Posterior cingulate gyrus (tissue), 11 donors: ENCODE measurements at regions of chr12 and their contacts with region 1.

Region 1: GRCh38 chr12:6688999-6689882 is at the start of gene ZNF384:
- DNase-seq: peak; percentile 99 to 100 (median 99)

Region 2: DNA sequence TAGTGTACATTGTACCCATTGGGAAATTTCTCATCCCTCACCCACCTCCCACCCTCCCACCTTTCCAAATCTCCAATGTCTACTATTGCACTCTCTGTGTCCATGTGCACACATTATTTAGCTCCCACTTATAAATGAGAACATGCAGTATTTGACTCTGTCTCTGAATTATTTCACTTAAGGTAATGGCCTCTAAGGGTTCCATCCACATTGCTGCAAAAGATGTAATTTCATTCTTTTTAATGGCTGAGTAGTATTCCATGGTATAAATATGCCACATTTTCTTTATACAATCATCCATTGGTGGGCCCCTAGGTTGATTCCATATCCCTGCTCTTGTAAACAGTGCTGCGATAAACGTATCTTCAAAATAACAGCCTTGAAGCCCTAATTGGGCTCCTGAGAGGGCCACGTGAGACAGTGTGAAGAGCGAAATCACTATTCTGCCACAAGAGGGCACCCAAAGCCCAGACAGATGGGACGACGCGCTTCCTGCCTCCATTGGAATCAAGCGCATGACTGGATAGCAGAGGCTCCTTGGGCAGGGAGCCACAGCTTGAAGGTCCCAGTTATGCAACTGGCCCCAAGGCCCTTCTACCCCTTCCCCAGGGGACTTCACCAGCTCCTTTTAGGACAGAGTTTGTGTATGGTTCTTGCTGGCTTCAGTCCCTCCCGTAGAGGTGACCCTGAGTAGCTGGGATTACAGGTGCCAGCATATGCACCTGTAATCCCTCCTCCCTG is 265.8 kb before region 1 on chr12:
- intact Hi-C with region 1: no loop called
- DNase-seq: peak; percentile 30 to 95 (median 70)

Region 3: GRCh38 chr12:6570264-6570887 is 118.9 kb before region 1 on chr12:
- intact Hi-C with region 1: no loop called
- DNase-seq: peak in 3 of 10 donors; percentile 77 to 88 (median 86)

Region 4: DNA sequence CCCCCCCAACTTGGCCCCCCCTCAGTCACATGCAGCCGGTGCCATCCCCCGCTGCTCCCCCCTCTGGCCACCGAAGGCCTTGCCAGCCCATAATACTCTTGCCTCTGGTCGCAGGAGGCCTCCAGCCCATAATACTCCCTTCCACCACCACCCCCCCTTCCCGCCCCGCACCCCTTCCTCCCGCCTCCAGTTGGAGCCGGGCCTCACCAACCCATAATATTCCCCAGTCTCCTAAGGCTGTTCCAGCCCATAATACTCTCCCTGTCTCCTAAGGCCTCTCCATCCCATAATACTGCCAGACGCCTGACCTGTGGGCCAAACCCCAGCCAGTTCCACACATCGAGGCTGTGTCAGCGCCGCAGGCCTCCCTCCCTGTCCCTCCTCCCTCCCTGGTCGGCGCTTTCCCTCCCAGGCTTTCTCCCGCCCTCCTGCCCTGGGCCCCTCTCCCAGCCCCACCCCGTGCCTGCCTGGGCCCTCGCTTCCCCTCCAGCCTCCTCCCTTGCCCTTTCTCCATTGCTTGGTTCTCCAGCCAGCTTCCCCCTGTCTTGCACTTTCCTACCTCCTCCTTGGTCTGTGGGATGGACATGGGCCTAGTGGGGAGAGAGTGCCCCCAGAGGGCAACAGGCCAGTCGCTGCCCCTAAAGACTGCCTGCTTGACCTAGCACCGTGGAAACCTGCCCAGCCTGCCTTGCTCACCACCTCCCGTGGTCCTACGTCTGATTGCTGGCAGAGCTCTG is 75.3 kb before region 1 on chr12:
- intact Hi-C with region 1: loop called (anchors 1 kb)
- DNase-seq: peak; percentile 79 to 98 (median 86)

Region 5: GRCh38 chr12:6647083-6647604 is 42.1 kb before region 1 on chr12 and contains the start of gene ACRBP:
- intact Hi-C with region 1: no loop called
- DNase-seq: peak; percentile 48 to 96 (median 59)

Region 6: DNA sequence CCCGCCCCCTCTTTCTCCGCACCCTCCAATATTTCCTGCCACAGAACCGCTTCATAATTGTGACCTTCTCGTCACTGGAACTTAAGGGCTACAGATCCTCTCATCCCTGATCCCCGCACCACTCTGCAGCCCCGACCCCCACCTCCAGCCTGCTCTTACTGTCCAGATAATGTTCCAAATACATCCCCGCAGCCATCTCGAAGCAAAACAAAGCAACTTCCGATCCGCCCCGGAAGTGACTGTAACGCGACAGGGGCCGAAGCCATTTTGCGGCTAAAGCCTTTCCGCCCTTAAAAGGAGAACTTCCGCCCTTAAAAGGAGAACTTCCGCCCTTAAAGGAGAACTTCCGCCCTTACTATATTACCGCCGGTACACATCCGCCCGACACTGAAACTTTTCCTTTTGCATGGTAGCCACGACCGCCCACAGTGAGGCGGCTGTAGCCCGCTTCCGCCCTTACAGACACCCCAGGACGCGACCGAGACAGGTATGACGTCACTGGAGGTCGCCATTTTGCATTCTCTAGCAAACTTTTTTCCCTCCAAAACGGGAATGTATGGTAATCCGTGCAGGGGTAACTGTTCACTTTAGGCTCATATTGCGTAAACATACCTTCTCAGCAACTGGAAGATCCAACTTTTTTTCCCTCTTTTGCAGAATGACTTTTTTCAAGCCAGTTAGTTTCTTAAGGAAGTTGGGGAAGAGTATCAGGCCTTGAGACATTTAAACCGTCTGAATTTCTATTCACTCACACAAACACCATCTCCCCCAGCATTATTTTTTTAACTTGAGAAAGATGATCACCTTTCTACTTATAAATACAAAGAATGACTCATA is 26.1 kb before region 1 on chr12 and contains the start of gene ING4:
- intact Hi-C with region 1: loop called (anchors 1 kb)
- DNase-seq: peak; percentile 95 to 100 (median 97)

Region 7: GRCh38 chr12:6723607-6724396 is 34.6 kb after region 1 on chr12 and contains the start of gene COPS7A:
- intact Hi-C with region 1: loop called (anchors 2 kb)
- DNase-seq: peak; percentile 97 to 100 (median 99)